Activated naive CD8-positive, alpha-beta T cell treated with anti-CD3 and anti-CD28 coated beads, Interleukin-2, amount 10 ng/mL, durations not matched to agents 7 days and 5 days (primary cell): ENCODE measurements at regions of chr17 and their contacts with region 1.

Region 1: DNA sequence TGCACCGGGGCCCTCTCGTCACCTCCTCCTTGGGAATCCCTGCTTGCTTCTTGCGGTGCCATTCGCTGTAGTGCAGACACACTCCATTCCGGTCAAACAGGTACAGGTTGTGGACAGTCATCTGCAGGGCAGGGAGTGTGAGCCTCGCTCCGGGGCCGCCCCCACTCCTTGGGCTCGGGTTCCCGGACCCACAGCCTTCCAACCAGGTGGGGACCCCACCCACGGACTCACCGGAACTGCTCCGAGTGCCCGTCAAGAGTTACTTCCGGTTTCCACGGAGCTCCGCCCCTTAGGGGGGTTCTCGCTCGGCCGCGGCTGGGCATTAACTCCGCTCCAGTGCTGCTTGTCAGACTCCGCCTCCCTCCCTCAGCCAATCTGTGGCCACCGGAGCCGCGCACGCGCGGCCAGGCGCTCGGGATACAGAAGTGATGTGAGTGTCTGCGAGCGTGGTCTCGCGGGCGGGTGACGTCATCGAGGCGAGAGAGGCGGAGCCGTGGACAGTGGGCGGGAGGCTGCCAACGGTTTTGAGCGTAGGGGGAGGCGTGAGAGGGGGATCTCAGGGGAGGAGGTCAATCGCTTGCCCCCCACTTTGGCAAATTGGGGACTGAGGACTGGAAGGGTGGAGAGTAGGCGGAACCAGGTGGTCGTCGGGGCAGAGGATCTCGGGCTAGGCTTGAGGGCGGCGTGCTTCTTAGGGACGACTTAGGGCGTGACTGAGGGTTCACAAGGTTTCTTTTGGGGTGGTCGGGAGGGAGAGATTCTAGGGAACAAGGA is at the starts of genes CNTROB and TRAPPC1:
- DNase-seq: peak; percentile 100
- ATAC-seq: peak; percentile 99
- H3K4me3 Mint-ChIP-seq: peak within 1 kb of the TSS; percentile 99
- H3K27ac Mint-ChIP-seq: peak within 1 kb of the TSS; percentile 98
- H3K4me1 Mint-ChIP-seq: peaks cover 34% of the 10 kb centered on the region
- H3K27me3 Mint-ChIP-seq: no peaks in the 10 kb centered on the region
- total RNA-seq, gene CNTROB: 57.3 to 62.7 TPM
- total RNA-seq, gene TRAPPC1: 222 to 237 TPM

Region 2: GRCh38 chr17:7915611-7916382 is 16.1 kb before region 1 on chr17 and contains the start of gene RNF227:
- POLR2A ChIA-PET with region 1: interaction called, 51 read pairs
- DNase-seq: peak; percentile 90
- ATAC-seq: peak; percentile 81
- H3K4me3 Mint-ChIP-seq: peak within 1 kb of the TSS; percentile 92
- H3K27ac Mint-ChIP-seq: peak within 1 kb of the TSS; percentile 91
- H3K4me1 Mint-ChIP-seq: peaks cover 25% of the 10 kb centered on the region
- H3K27me3 Mint-ChIP-seq: no peaks in the 10 kb centered on the region
- total RNA-seq, gene RNF227: 4.5 to 5.5 TPM

Region 3: GRCh38 chr17:7944326-7944725 is 12.4 kb after region 1 on chr17:
- POLR2A ChIA-PET with region 1: interaction called, 11 read pairs
- DNase-seq: no peak
- ATAC-seq: no peak
- H3K4me3 Mint-ChIP-seq: no peak overlapping the region
- H3K27ac Mint-ChIP-seq: no peak overlapping the region
- H3K4me1 Mint-ChIP-seq: peaks cover 7% of the 10 kb centered on the region
- H3K27me3 Mint-ChIP-seq: no peaks in the 10 kb centered on the region

Region 4: GRCh38 chr17:7951143-7951803 is 19.4 kb after region 1 on chr17:
- POLR2A ChIA-PET with region 1: interaction called, 11 read pairs
- DNase-seq: no peak
- ATAC-seq: peak; percentile 99
- H3K4me3 Mint-ChIP-seq: peak overlapping the region; percentile 54
- H3K27ac Mint-ChIP-seq: peak overlapping the region; percentile 88
- H3K4me1 Mint-ChIP-seq: peaks cover 14% of the 10 kb centered on the region
- H3K27me3 Mint-ChIP-seq: no peaks in the 10 kb centered on the region

Region 5: DNA sequence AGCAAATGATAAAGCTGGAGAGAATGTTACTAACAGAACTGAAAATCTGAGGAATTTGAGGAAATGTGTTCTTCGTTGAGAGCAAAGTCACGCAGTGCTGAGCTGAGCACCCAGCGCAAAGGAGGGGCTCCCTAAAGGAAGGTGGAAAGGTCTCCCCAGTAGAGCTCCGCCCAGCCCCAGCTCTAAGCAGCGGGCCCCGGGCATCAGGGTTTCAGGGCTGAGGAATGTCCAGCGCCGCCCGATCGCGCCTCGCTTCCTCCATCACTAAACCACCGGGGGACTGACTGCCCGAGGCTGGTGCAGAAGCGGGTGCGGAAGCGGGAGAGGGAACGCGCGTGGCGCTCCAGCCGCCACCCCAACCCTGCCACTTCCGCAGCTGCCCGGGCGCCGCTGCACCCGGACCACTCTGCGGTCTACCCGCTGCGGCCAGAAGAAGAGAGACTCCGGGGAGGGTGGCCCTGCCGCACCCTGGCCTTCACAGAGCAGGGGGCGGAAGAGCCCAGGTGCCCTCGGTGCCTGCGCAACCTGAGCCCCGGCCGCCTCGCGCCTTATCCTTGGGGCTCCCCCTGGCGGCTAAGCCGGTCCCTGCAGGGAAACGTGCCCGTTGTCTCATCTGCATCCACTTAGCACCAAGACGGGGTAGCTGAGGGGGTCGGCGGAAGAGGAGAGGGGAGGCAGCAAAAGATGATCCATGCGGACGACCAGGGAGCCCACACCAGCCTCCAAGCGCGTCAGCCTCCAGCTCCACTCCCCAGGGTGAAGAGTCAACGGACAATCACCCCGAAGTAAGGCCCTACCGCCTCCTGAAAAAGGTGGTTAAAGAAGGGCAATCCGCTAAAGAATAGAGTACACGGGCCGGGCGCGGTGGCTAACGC is 58.1 kb after region 1 on chr17:
- POLR2A ChIA-PET with region 1: interaction called, 13 read pairs
- DNase-seq: peak; percentile 97
- ATAC-seq: peak; percentile 85
- H3K4me3 Mint-ChIP-seq: peak overlapping the region; percentile 75
- H3K27ac Mint-ChIP-seq: peak overlapping the region; percentile 84
- H3K4me1 Mint-ChIP-seq: peaks cover 14% of the 10 kb centered on the region
- H3K27me3 Mint-ChIP-seq: peaks cover 28% of the 10 kb centered on the region